T-cell (primary cell): ENCODE measurements at regions of chr14 and their contacts with region 1.

Region 1: DNA sequence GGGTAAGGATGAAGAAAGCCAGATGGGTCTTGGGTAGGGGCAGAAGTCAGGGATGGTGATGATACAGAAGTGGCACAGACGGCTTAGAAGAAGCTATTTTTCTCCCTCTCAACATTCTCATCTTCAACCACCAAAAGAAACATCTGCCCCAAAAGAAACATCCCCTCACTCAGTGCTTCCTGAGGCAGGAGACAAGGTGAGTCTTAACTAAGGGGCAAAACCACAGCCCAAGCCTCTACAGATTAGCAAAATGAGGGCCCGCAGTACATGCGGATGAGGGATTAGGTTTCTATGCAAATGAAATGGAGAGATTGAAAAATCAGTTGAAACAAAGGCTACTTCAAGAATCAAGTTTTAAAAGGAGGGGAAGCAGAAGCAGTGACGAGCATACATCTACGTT is 241.3 kb upstream of the CCDC196 start:
- DNase-seq: no peak
- ATAC-seq: no peak
- H3K4me3 ChIP-seq: no peak overlapping the region
- H3K4me3 Mint-ChIP-seq: no peak overlapping the region
- H3K27ac ChIP-seq: no peak overlapping the region
- H3K27ac Mint-ChIP-seq: no peak overlapping the region
- H3K4me1 ChIP-seq: no peaks in the 10 kb centered on the region
- H3K4me1 Mint-ChIP-seq: no peaks in the 10 kb centered on the region
- H3K27me3 ChIP-seq: no peaks in the 10 kb centered on the region
- H3K27me3 Mint-ChIP-seq: peaks cover 2 to 7% of the 10 kb centered on the region in 2 donors

Region 2: GRCh38 chr14:66081594-66082376 is 163.0 kb before region 1 on chr14:
- CTCF ChIA-PET with region 1: no interaction called
- POLR2A ChIA-PET with region 1: no interaction called
- DNase-seq: no peak
- ATAC-seq: no peak
- H3K4me3 ChIP-seq: no peak overlapping the region
- H3K4me3 Mint-ChIP-seq: no peak overlapping the region
- H3K27ac ChIP-seq: no peak overlapping the region
- H3K27ac Mint-ChIP-seq: no peak overlapping the region
- H3K4me1 ChIP-seq: no peaks in the 10 kb centered on the region
- H3K4me1 Mint-ChIP-seq: no peaks in the 10 kb centered on the region
- H3K27me3 ChIP-seq: peaks cover 0 to 3% of the 10 kb centered on the region in 2 experiments
- H3K27me3 Mint-ChIP-seq: peaks cover 10 to 18% of the 10 kb centered on the region in 2 donors

Region 3: DNA sequence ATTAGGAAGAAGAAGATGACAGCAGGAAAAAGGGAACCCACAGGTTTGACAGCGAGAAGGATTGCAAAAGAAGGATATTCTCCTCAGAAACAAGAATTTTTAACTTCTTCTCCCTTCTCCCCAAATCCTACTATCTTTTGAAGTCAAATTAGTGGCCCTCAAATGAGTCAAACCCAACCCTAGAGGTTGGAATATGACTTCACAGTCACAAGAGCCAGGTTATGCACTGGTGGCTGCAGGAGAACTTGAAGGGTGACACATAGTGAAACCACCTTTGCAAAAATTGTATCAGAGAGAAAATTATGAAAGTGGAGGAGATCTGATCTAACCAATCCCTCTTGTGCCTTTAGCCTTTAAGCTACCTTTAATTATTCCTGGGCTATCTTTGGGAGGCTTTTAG is 144.9 kb before region 1 on chr14:
- CTCF ChIA-PET with region 1: no interaction called
- POLR2A ChIA-PET with region 1: no interaction called
- DNase-seq: no peak
- ATAC-seq: no peak
- H3K4me3 ChIP-seq: no peak overlapping the region
- H3K4me3 Mint-ChIP-seq: no peak overlapping the region
- H3K27ac ChIP-seq: no peak overlapping the region
- H3K27ac Mint-ChIP-seq: no peak overlapping the region
- H3K4me1 ChIP-seq: no peaks in the 10 kb centered on the region
- H3K4me1 Mint-ChIP-seq: no peaks in the 10 kb centered on the region
- H3K27me3 ChIP-seq: peaks cover 0 to 5% of the 10 kb centered on the region in 2 experiments
- H3K27me3 Mint-ChIP-seq: peaks cover 0 to 3% of the 10 kb centered on the region in 2 donors

Region 4: DNA sequence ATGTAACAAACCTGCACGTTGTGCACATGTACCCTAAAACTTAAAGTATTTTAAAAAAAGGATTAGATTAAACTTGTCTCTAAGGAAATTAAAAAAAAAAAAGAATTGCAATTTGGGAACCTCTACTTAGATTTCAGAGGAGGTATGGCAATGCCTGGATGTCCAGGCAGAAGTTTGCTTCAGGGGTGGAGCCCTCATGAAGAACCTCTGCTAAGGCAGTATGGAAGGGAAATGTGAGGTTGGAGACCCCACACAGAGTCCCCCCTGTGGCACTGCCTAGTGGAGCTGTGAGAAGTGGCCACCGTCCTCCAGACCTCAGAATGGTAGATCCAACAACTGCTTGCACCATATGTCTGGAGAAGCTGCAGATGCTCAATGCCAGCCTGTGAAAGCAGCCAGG is 38.3 kb before region 1 on chr14:
- CTCF ChIA-PET with region 1: no interaction called
- POLR2A ChIA-PET with region 1: no interaction called
- DNase-seq: no peak
- ATAC-seq: no peak
- H3K4me3 ChIP-seq: peak overlapping the region in 1 of 2 donors; percentile 23
- H3K4me3 Mint-ChIP-seq: no peak overlapping the region
- H3K27ac ChIP-seq: no peak overlapping the region
- H3K27ac Mint-ChIP-seq: no peak overlapping the region
- H3K4me1 ChIP-seq: no peaks in the 10 kb centered on the region
- H3K4me1 Mint-ChIP-seq: no peaks in the 10 kb centered on the region
- H3K27me3 ChIP-seq: no peaks in the 10 kb centered on the region
- H3K27me3 Mint-ChIP-seq: peaks cover 3 to 11% of the 10 kb centered on the region in 2 donors

Region 5: DNA sequence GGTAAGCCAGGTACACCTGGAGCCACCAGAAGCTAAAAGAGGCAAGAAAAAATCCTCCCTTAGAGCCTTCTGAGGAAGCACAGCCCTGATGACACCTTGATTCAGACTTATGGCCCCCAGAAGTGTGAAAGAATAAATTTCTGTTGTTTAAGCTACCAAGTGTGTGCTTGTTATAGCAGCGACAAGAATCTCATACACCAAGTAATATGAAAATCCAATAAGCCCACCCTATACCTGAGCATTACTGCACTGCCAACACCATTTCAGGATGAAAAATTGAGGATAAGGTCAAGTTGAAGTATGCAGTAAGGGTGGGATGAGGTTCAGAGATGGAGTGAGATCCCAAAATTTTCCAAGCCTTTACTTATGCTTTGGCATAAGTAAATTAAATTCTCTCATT is 77.7 kb after region 1 on chr14:
- CTCF ChIA-PET with region 1: no interaction called
- POLR2A ChIA-PET with region 1: interaction called in 1 of 2 experiments, 10 read pairs
- DNase-seq: no peak
- ATAC-seq: no peak
- H3K4me3 ChIP-seq: no peak overlapping the region
- H3K4me3 Mint-ChIP-seq: no peak overlapping the region
- H3K27ac ChIP-seq: no peak overlapping the region
- H3K27ac Mint-ChIP-seq: no peak overlapping the region
- H3K4me1 ChIP-seq: no peaks in the 10 kb centered on the region
- H3K4me1 Mint-ChIP-seq: no peaks in the 10 kb centered on the region
- H3K27me3 ChIP-seq: no peaks in the 10 kb centered on the region
- H3K27me3 Mint-ChIP-seq: peaks cover 0 to 3% of the 10 kb centered on the region in 2 donors